Activated CD4-positive, alpha-beta T cell treated with anti-CD3 and anti-CD28 coated beads for 36 hours (primary cell): ENCODE measurements at regions of chr11 and their contacts with region 1.

Region 1: GRCh38 chr11:123580557-123581275 is 73.7 kb downstream of the SCN3B start:
- DNase-seq: peak; percentile 84
- ATAC-seq: peak; percentile 89
- H3K4me3 Mint-ChIP-seq: no peak overlapping the region
- H3K27ac Mint-ChIP-seq: no peak overlapping the region
- H3K4me1 Mint-ChIP-seq: peaks cover 10% of the 10 kb centered on the region
- H3K27me3 Mint-ChIP-seq: no peaks in the 10 kb centered on the region

Region 2: GRCh38 chr11:123511037-123511870 is 69.5 kb before region 1 on chr11:
- CTCF ChIA-PET with region 1: interaction called, 11 read pairs
- POLR2A ChIA-PET with region 1: no interaction called
- intact Hi-C with region 1: loop called in 1 of 2 experiments (anchors 1 kb)
- DNase-seq: peak; percentile 89
- ATAC-seq: peak; percentile 99
- H3K4me3 Mint-ChIP-seq: no peak overlapping the region
- H3K27ac Mint-ChIP-seq: no peak overlapping the region
- H3K4me1 Mint-ChIP-seq: peaks cover 8% of the 10 kb centered on the region
- H3K27me3 Mint-ChIP-seq: no peaks in the 10 kb centered on the region

Region 3: GRCh38 chr11:123560006-123560405 is 20.7 kb before region 1 on chr11:
- CTCF ChIA-PET with region 1: interaction called, 11 read pairs
- POLR2A ChIA-PET with region 1: no interaction called
- intact Hi-C with region 1: no loop called
- DNase-seq: peak; percentile 77
- ATAC-seq: peak; percentile 89
- H3K4me3 Mint-ChIP-seq: peak overlapping the region; percentile 57
- H3K27ac Mint-ChIP-seq: peak overlapping the region; percentile 79
- H3K4me1 Mint-ChIP-seq: peaks cover 19% of the 10 kb centered on the region
- H3K27me3 Mint-ChIP-seq: peaks cover under 1% of the 10 kb centered on the region

Region 4: DNA sequence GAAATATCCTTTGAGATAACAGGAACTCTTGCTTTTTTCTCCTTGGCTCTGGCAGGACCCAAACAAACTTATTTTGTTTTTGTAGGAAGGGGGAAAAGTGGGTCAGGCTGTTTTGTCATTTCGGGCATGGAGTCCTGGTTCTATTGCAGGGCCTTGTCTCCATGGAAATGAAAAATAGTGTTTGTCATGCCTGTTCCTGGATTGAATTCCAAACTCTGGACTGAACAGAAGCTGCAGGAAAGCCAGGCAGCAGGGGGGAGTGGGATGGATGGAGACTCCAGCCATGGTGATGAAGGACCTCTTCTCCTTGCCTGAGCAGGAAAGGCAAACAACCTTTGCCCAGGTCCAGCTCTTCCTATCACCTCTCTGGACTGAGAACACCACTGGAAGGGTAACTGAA is 13.2 kb before region 1 on chr11:
- CTCF ChIA-PET with region 1: interaction called, 21 read pairs
- POLR2A ChIA-PET with region 1: no interaction called
- intact Hi-C with region 1: no loop called
- DNase-seq: no peak
- ATAC-seq: no peak
- H3K4me3 Mint-ChIP-seq: no peak overlapping the region
- H3K27ac Mint-ChIP-seq: no peak overlapping the region
- H3K4me1 Mint-ChIP-seq: no peaks in the 10 kb centered on the region
- H3K27me3 Mint-ChIP-seq: no peaks in the 10 kb centered on the region